A673 (cell line): ENCODE measurements at regions of chr11 and their contacts with region 1.

Region 1: DNA sequence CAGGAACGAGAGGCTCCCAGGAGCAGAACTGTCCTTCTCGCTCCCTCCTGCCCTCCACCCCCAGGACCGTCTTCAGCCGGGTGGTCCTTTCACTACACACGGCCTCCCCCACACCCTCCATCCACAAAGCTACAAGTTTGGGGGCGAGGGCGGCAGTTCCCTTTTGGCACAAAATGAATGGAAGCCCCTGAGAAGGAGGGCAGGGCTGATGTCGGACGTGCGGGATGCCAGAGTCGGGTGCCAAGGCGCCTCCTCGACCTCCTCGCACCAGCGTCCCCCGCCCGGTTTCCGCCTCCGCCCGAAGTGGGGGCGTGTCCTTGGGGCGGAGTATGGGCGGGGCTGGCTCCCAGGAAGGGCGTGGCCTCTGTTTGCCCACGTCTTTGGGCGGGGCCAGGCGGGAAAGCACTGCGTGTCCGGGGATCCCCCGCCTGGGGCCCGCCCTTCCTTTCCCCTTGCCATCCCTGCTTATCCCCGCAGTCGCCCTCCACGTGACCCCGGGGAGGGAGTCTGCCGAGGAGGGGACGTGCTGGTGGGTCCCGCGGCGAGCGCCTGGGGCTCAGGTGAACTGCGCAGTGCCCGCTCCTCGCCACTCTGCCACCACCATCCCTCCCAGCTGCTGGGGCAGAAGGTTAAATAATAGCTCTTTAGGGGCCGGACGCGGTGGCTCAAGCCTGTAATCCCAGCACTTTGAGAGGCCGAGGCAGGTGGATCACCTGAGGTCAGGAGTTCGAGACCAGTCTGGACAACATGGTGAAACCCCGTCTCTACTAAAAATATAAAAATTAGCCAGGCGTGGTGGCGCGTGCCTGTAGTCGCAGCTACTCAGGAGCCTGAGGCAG is 937 bp upstream of the EFEMP2 start:
- DNase-seq: peak; percentile 95
- H3K4me3 ChIP-seq: peak overlapping the region; percentile 68
- H3K27ac ChIP-seq: peak overlapping the region; percentile 75
- H3K4me1 ChIP-seq: peaks cover 18% of the 10 kb centered on the region
- H3K27me3 ChIP-seq: no peaks in the 10 kb centered on the region
- CTCF ChIP-seq: no peak

Region 2: GRCh38 chr11:65900125-65900898 is 26.8 kb after region 1 on chr11 and contains the start of gene FOSL1:
- CTCF ChIA-PET with region 1: no interaction called
- POLR2A ChIA-PET with region 1: no interaction called
- intact Hi-C with region 1: no loop called
- DNase-seq: peak; percentile 94
- H3K4me3 ChIP-seq: peak within 1 kb of the TSS; percentile 65
- H3K27ac ChIP-seq: peak within 1 kb of the TSS; percentile 47
- H3K4me1 ChIP-seq: peaks cover 6% of the 10 kb centered on the region
- H3K27me3 ChIP-seq: no peaks in the 10 kb centered on the region
- CTCF ChIP-seq: no peak
- total RNA-seq, gene FOSL1: 12.6 and 29.0 TPM in 2 replicates

Region 3: DNA sequence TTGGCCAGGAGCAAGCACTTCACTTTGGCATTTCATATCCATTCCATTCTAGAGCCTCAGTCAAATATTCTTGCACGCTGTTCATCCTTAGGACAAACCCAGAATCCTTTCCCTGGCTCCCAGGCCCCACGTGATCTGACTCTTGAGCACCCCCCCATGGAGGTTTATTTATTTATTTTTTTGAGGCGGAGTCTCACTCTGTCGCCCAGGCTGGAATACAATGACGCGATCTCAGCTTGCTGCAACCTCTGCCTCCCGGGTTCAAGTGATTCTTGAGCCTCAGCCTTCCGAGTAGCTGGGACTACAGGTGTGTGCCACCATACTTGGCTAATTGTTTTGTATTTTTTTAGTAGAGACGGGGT is 59.0 kb after region 1 on chr11:
- CTCF ChIA-PET with region 1: no interaction called
- POLR2A ChIA-PET with region 1: interaction called, 12 read pairs
- intact Hi-C with region 1: no loop called
- DNase-seq: peak; percentile 75
- H3K4me3 ChIP-seq: no peak overlapping the region
- H3K27ac ChIP-seq: no peak overlapping the region
- H3K4me1 ChIP-seq: no peaks in the 10 kb centered on the region
- H3K27me3 ChIP-seq: no peaks in the 10 kb centered on the region
- CTCF ChIP-seq: no peak; the same call in 1 of the 2 replicates